HepG2 (cell line): ENCODE measurements at regions of chr20 and their contacts with region 1.

Region 1: GRCh38 chr20:2688041-2688591 is 4.5 kb upstream of the EBF4 start:
- DNase-seq: no peak
- ATAC-seq: peak; percentile 31; the same call in 2 of the 3 replicates
- H3K4me3 ChIP-seq: peak overlapping the region in 1 of 3 experiments; percentile 18; a peak in 1 of 6 replicates
- H3K27ac ChIP-seq: no peak overlapping the region
- H3K4me1 ChIP-seq: peaks cover 16% of the 10 kb centered on the region
- H3K27me3 ChIP-seq: peaks cover 15 to 68% of the 10 kb centered on the region in 2 experiments
- CTCF ChIP-seq: peak; percentile 74
- EP300 ChIP-seq: no peak
- POLR2A ChIP-seq: no peak
- RAD21 ChIP-seq: peak; percentile 70

Region 2: DNA sequence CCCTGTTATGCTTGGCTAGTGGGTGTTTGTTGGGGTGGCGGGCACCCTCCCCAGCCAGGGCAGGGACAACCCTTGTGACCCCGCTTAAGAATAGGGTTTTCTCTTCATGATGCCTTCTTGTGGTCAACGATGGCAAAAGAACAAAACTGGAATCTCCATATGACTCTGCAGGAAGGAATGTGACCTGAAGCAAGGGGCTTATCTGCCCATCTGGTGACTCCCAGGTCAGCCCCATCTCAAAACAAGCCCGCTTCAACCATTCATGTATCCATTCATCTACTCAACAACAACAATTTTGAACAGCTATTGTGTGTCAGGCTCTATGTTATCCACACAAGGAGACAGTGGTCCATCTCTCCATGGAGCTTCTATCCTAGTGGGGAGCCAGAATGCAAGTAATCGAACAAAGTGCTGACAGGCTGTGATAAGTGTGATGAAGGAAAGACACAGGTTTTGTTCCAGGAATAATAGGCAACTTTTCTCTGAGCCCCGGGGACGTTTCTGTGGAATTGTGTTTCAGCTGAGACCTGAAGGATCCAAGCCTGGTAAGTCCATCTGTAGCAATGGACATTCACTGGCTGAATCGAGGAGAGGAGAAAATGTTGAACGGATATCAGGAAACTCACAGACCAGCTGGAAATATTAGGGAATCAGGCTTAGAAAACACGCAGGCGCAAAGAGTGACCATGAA is 338.2 kb before region 1 on chr20:
- CTCF ChIA-PET with region 1: no interaction called
- POLR2A ChIA-PET with region 1: no interaction called
- in situ Hi-C with region 1: no loop called
- intact Hi-C with region 1: no loop called
- DNase-seq: peak; percentile 39
- ATAC-seq: no peak
- H3K4me3 ChIP-seq: no peak overlapping the region
- H3K27ac ChIP-seq: no peak overlapping the region
- H3K4me1 ChIP-seq: peaks cover 4% of the 10 kb centered on the region; the same call in 1 of the 2 replicates
- H3K27me3 ChIP-seq: peaks cover 0 to 6% of the 10 kb centered on the region in 2 experiments; a peak in 2 of 5 replicates
- CTCF ChIP-seq: no peak
- EP300 ChIP-seq: no peak
- POLR2A ChIP-seq: no peak
- RAD21 ChIP-seq: no peak

Region 3: GRCh38 chr20:2671977-2672376 is 16.1 kb before region 1 on chr20:
- CTCF ChIA-PET with region 1: no interaction called
- POLR2A ChIA-PET with region 1: no interaction called
- in situ Hi-C with region 1: no loop called
- intact Hi-C with region 1: no loop called
- DNase-seq: no peak
- ATAC-seq: peak; percentile 53
- H3K4me3 ChIP-seq: no peak overlapping the region
- H3K27ac ChIP-seq: no peak overlapping the region
- H3K4me1 ChIP-seq: no peaks in the 10 kb centered on the region
- H3K27me3 ChIP-seq: peaks cover 0 to 38% of the 10 kb centered on the region in 2 experiments; a peak in 3 of 5 replicates
- CTCF ChIP-seq: peak; percentile 50
- EP300 ChIP-seq: no peak
- POLR2A ChIP-seq: no peak
- RAD21 ChIP-seq: no peak

Region 4: GRCh38 chr20:2742934-2743559 is 54.9 kb after region 1 on chr20:
- CTCF ChIA-PET with region 1: interaction called, 8 read pairs
- POLR2A ChIA-PET with region 1: no interaction called
- in situ Hi-C with region 1: no loop called
- intact Hi-C with region 1: loop called (anchors 1 kb)
- DNase-seq: peak; percentile 73
- ATAC-seq: peak; percentile 89
- H3K4me3 ChIP-seq: no peak overlapping the region
- H3K27ac ChIP-seq: no peak overlapping the region
- H3K4me1 ChIP-seq: peaks cover 8% of the 10 kb centered on the region; the same call in 1 of the 2 replicates
- H3K27me3 ChIP-seq: peaks cover 12 to 75% of the 10 kb centered on the region in 2 experiments
- CTCF ChIP-seq: peak; percentile 97
- EP300 ChIP-seq: no peak
- POLR2A ChIP-seq: no peak
- RAD21 ChIP-seq: peak; percentile 63

Region 5: GRCh38 chr20:2984956-2985661 is 297.0 kb after region 1 on chr20:
- CTCF ChIA-PET with region 1: no interaction called
- POLR2A ChIA-PET with region 1: no interaction called
- in situ Hi-C with region 1: no loop called
- intact Hi-C with region 1: no loop called
- DNase-seq: no peak
- ATAC-seq: no peak; the same call in 2 of the 3 replicates
- H3K4me3 ChIP-seq: no peak overlapping the region
- H3K27ac ChIP-seq: no peak overlapping the region
- H3K4me1 ChIP-seq: no peaks in the 10 kb centered on the region
- H3K27me3 ChIP-seq: no peaks in the 10 kb centered on the region
- CTCF ChIP-seq: no peak
- EP300 ChIP-seq: no peak
- POLR2A ChIP-seq: no peak
- RAD21 ChIP-seq: no peak